ENCODE measurements at regions of chr2 and their contacts with region 1.

Region 1: GRCh38 chr2:47334356-47335136 is 68.4 kb upstream of the MSH2 start:
- DNase-seq: no peak
- H3K4me3 ChIP-seq: no peak overlapping the region
- H3K27ac ChIP-seq: peak overlapping the region in 1 of 8 donors; percentile 42
- H3K4me1 ChIP-seq: peaks cover 6 to 36% (median 17%) of the 10 kb centered on the region in 6 donors
- H3K27me3 ChIP-seq: no peaks in the 10 kb centered on the region
- CTCF ChIP-seq: no peak
- POLR2A ChIP-seq: no peak

Region 2: DNA sequence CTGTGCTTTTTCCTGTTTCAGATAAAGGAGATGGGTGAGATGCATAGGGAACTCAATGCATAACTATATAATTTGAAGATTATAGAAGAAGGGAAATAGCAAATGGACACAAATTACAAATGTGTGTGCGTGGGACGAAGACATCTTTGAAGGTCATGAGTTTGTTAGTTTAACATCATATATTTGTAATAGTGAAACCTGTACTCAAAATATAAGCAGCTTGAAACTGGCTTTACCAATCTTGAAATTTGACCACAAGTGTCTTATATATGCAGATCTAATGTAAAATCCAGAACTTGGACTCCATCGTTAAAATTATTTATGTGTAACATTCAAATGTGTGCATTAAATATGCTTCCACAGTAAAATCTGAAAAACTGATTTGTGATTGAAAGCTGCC is 52.0 kb after region 1 on chr2:
- intact Hi-C with region 1: loop called (anchors 2 kb)
- DNase-seq: no peak
- H3K4me3 ChIP-seq: no peak overlapping the region
- H3K27ac ChIP-seq: no peak overlapping the region
- H3K4me1 ChIP-seq: no peaks in the 10 kb centered on the region
- H3K27me3 ChIP-seq: no peaks in the 10 kb centered on the region
- CTCF ChIP-seq: no peak
- POLR2A ChIP-seq: no peak

Region 3: DNA sequence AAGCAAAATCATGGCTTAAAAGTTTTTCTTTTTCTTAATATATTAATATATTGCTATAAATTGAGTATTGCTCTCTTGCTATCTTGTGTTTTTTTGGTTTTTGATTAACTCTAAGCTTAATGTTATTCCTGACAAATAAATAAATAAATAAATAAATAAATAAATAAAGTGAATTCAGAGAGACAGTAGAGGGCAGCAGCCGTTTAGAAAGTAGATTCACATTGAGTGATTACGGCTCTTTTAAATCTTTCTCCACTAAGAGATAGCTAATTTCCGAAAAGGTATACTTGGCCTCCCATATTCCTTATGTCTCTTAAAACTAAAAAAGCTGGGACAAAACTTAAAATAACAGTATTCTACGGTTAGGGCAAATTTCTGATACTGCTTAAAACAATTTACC is 102.7 kb after region 1 on chr2:
- intact Hi-C with region 1: no loop called
- DNase-seq: no peak
- H3K4me3 ChIP-seq: no peak overlapping the region
- H3K27ac ChIP-seq: no peak overlapping the region
- H3K4me1 ChIP-seq: no peaks in the 10 kb centered on the region
- H3K27me3 ChIP-seq: no peaks in the 10 kb centered on the region
- CTCF ChIP-seq: peak in 5 of 11 experiments; percentile 17 to 48 (median 28)
- POLR2A ChIP-seq: no peak

Region 4: DNA sequence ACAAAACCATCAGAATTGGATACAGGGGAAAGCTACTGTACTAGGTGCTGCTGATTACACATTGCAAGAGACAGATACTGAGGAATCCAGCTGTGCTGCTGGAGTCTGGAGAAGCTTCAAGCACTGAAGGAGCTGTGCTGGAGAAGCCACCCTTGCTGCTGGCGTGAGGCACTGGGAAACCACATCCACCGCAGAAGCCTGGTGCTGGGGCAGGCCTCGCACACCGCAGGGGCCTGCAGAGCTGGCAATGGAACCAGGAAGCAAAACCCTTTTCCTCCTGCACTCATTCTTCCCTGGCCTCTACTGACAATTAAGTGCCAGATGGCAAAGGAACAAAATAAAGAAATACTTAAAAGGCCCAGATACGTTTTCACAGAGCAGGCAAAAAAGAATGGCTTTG is 354.0 kb after region 1 on chr2:
- intact Hi-C with region 1: no loop called
- DNase-seq: no peak
- H3K4me3 ChIP-seq: no peak overlapping the region
- H3K27ac ChIP-seq: no peak overlapping the region
- H3K4me1 ChIP-seq: peaks cover 0 to 16% (median 4%) of the 10 kb centered on the region in 6 donors
- H3K27me3 ChIP-seq: peaks cover 0 to 5% (median 0%) of the 10 kb centered on the region in 7 donors
- CTCF ChIP-seq: no peak
- POLR2A ChIP-seq: no peak